GM12878 (cell line): ENCODE measurements at regions of chr2 and their contacts with region 1.

Region 1: GRCh38 chr2:73408198-73408597 is 22.6 kb downstream of the ALMS1 start:
- DNase-seq: no peak
- ATAC-seq: peak; percentile 76
- H3K4me3 ChIP-seq: 0 out of 2 replicates have a peak overlapping the region, but pooled peaks have one; percentile 15
- H3K27ac ChIP-seq: no peak overlapping the region
- H3K4me1 ChIP-seq: no peaks in the 10 kb centered on the region; the same call in none of the 2 replicates
- H3K27me3 ChIP-seq: no peaks in the 10 kb centered on the region
- CTCF ChIP-seq: no peak
- EP300 ChIP-seq: no peak
- POLR2A ChIP-seq: no peak
- RAD21 ChIP-seq: no peak

Region 2: DNA sequence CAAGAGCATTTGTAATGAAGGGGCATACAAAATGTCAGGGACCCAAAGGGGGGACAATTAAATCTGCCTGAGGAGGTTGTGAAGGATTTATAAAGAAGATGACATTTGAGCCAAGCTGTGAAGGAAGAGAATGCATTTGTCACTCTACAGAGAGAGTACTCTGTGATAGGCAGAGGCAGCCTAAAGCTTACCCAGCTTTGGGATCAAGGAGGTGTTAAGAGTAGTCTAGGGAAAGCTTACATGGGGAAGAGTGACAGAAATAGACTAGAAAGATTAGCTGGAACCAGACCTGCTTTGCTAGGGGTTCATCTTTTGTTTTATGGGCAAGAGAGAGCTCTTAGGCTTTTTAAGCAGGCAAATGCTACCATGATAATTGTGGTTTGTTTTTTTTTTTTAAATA is 1091.4 kb before region 1 on chr2:
- CTCF ChIA-PET with region 1: no interaction called
- POLR2A ChIA-PET with region 1: interaction called, 11 read pairs
- RAD21 ChIA-PET with region 1: no interaction called
- SMC1A ChIA-PET with region 1: no interaction called
- in situ Hi-C with region 1: no loop called
- intact Hi-C with region 1: no loop called
- DNase-seq: no peak
- ATAC-seq: no peak
- H3K4me3 ChIP-seq: no peak overlapping the region
- H3K27ac ChIP-seq: no peak overlapping the region
- H3K4me1 ChIP-seq: no peaks in the 10 kb centered on the region
- H3K27me3 ChIP-seq: no peaks in the 10 kb centered on the region
- CTCF ChIP-seq: no peak
- EP300 ChIP-seq: no peak
- POLR2A ChIP-seq: no peak
- RAD21 ChIP-seq: no peak

Region 3: GRCh38 chr2:73112913-73113633 is 295.1 kb before region 1 on chr2 and contains the start of gene RAB11FIP5:
- CTCF ChIA-PET with region 1: no interaction called
- POLR2A ChIA-PET with region 1: no interaction called
- RAD21 ChIA-PET with region 1: no interaction called
- SMC1A ChIA-PET with region 1: no interaction called
- in situ Hi-C with region 1: no loop called
- intact Hi-C with region 1: no loop called
- DNase-seq: no peak
- ATAC-seq: peak; percentile 86
- H3K4me3 ChIP-seq: peak within 1 kb of the TSS; percentile 60; the same call in 1 of the 2 replicates
- H3K27ac ChIP-seq: no peak within 1 kb of the TSS
- H3K4me1 ChIP-seq: no peaks in the 10 kb centered on the region
- H3K27me3 ChIP-seq: peaks cover 6 to 17% of the 10 kb centered on the region in 2 experiments
- CTCF ChIP-seq: no peak
- EP300 ChIP-seq: no peak
- POLR2A ChIP-seq: no peak
- RAD21 ChIP-seq: no peak
- polyA plus RNA-seq, gene RAB11FIP5: 0.07 TPM in 1 of 2 experiments, not detected in the other

Region 4: GRCh38 chr2:73418343-73418742 is 10.1 kb after region 1 on chr2:
- CTCF ChIA-PET with region 1: interaction called, 10 read pairs
- POLR2A ChIA-PET with region 1: no interaction called
- RAD21 ChIA-PET with region 1: no interaction called
- SMC1A ChIA-PET with region 1: interaction called, 4 read pairs
- in situ Hi-C with region 1: no loop called
- intact Hi-C with region 1: no loop called
- DNase-seq: no peak
- ATAC-seq: no peak
- H3K4me3 ChIP-seq: no peak overlapping the region
- H3K27ac ChIP-seq: no peak overlapping the region
- H3K4me1 ChIP-seq: no peaks in the 10 kb centered on the region
- H3K27me3 ChIP-seq: no peaks in the 10 kb centered on the region
- CTCF ChIP-seq: no peak
- EP300 ChIP-seq: no peak
- POLR2A ChIP-seq: no peak
- RAD21 ChIP-seq: no peak

Region 5: DNA sequence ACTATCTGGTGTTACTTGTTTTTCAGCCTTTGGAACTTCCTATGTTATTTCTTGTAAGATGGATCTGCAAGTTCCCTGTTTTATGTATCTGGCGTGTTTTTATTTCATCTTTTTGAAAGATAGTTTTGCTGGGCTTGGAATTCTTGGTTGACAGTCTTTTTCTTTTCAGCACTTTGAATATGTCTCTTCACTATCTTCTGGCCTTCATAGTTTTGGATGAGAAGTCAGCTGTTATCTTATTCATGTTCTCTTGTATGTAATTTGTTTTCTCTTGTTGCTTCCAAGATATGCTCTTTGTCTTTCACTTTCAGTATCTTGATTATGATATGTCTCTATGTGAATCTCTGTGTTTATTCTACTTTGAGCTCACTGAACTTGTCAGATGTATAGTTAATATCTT is 27.8 kb after region 1 on chr2:
- CTCF ChIA-PET with region 1: no interaction called
- POLR2A ChIA-PET with region 1: no interaction called
- RAD21 ChIA-PET with region 1: no interaction called
- SMC1A ChIA-PET with region 1: no interaction called
- in situ Hi-C with region 1: no loop called
- intact Hi-C with region 1: no loop called
- DNase-seq: no peak
- ATAC-seq: no peak
- H3K4me3 ChIP-seq: no peak overlapping the region
- H3K27ac ChIP-seq: no peak overlapping the region
- H3K4me1 ChIP-seq: no peaks in the 10 kb centered on the region
- H3K27me3 ChIP-seq: no peaks in the 10 kb centered on the region
- CTCF ChIP-seq: no peak
- EP300 ChIP-seq: no peak
- POLR2A ChIP-seq: no peak
- RAD21 ChIP-seq: no peak

Region 6: DNA sequence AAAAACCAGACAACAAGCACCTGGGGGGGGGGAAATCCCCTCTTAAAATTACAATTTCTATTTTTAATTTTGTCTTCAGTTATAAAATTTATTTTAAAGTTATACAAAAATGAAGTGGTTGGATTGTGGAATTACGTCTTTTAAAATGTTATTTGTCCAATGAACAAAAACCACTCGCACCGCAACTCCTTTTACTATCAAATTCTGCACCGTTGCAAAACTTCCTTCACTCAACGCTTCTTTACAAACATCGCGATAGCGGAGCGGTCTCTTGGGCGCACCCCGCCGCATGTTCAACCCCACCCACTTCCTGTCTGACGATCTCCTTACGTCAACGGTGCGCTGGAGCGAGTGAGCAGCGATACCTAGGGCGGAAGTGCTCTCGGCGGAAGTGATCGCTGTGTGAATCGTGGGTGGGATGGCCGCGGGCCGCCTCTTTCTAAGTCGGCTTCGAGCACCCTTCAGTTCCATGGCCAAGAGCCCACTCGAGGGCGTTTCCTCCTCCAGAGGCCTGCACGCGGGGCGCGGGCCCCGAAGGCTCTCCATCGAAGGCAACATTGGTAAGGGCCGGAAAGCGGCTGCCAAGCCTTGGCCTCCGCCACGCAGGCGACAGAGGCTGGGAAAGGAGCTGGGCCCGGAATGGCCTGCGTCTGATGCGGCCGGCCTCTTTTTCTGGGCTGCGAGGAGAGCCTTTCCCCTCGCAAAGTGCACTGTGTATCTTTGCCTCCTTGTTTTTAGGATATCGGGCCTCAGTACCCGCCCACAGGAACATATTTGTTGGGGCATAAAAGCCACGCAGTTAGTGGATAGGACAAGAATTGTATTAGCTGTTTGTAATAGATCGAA is 518.5 kb after region 1 on chr2 and contains the start of gene DGUOK:
- CTCF ChIA-PET with region 1: no interaction called
- POLR2A ChIA-PET with region 1: interaction called, 11 read pairs
- RAD21 ChIA-PET with region 1: no interaction called
- SMC1A ChIA-PET with region 1: no interaction called
- in situ Hi-C with region 1: no loop called
- intact Hi-C with region 1: no loop called
- DNase-seq: peak; percentile 97
- ATAC-seq: peak; percentile 96
- H3K4me3 ChIP-seq: peak within 1 kb of the TSS; percentile 97
- H3K27ac ChIP-seq: peak within 1 kb of the TSS; percentile 87
- H3K4me1 ChIP-seq: peaks cover 13% of the 10 kb centered on the region
- H3K27me3 ChIP-seq: no peaks in the 10 kb centered on the region
- CTCF ChIP-seq: no peak
- EP300 ChIP-seq: peak; percentile 13 to 25; a peak in 2 of 4 replicates
- POLR2A ChIP-seq: peak; percentile 97
- RAD21 ChIP-seq: no peak
- polyA plus RNA-seq, gene DGUOK: 175 to 234 TPM

Region 7: DNA sequence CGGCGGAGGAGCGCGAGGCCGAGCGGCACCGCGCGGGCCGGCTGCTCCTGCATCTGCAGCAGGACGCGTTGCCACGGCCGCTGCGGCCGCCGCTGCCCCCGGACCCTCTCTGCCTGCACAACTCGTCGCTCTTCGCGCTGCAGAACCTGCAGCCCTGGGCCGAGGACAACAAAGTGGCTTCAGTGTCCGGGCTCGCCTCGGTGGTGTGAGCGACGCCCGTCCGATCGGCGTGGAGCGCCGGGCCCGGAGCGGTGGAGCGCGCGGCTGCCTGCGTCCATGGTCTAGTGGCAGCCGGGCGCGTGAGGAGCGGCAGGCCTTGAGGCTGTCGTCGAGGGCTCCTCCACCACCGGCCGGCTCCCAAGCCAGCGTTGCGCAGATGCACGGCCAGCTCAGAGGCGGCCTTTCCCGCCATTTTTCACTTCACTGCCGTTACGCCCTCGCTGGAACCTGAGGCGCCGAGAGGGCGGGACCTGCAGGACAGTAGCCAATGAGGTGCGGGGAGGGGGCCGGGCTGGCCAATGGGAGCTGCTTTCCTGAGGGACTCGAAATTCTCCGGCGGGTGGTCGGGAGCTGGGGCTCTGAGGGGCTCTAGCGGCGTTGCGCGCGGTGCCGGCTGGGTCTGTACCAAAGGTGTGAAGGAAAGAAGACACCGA is 1107.9 kb after region 1 on chr2:
- CTCF ChIA-PET with region 1: no interaction called
- POLR2A ChIA-PET with region 1: no interaction called
- RAD21 ChIA-PET with region 1: no interaction called
- SMC1A ChIA-PET with region 1: no interaction called
- in situ Hi-C with region 1: no loop called
- intact Hi-C with region 1: no loop called
- DNase-seq: no peak
- ATAC-seq: peak; percentile 70
- H3K4me3 ChIP-seq: peak overlapping the region; percentile 31; the same call in 1 of the 2 replicates
- H3K27ac ChIP-seq: no peak overlapping the region
- H3K4me1 ChIP-seq: peaks cover 13% of the 10 kb centered on the region; the same call in 1 of the 2 replicates
- H3K27me3 ChIP-seq: peaks cover 18 to 31% of the 10 kb centered on the region in 2 experiments
- CTCF ChIP-seq: no peak
- EP300 ChIP-seq: no peak
- POLR2A ChIP-seq: no peak
- RAD21 ChIP-seq: no peak